ENCODE measurements at regions of chr15 and their contacts with region 1.

Region 1: GRCh38 chr15:38453971-38454695 is at the start of gene FAM98B:
- DNase-seq: peak; percentile 92
- ATAC-seq: peak; percentile 96
- H3K4me3 Mint-ChIP-seq: peak within 1 kb of the TSS; percentile 94
- H3K27ac Mint-ChIP-seq: peak within 1 kb of the TSS; percentile 92
- H3K4me1 Mint-ChIP-seq: peaks cover 34% of the 10 kb centered on the region
- H3K27me3 Mint-ChIP-seq: peaks cover 15% of the 10 kb centered on the region
- total RNA-seq, gene FAM98B: 34.8 to 41.4 TPM

Region 2: DNA sequence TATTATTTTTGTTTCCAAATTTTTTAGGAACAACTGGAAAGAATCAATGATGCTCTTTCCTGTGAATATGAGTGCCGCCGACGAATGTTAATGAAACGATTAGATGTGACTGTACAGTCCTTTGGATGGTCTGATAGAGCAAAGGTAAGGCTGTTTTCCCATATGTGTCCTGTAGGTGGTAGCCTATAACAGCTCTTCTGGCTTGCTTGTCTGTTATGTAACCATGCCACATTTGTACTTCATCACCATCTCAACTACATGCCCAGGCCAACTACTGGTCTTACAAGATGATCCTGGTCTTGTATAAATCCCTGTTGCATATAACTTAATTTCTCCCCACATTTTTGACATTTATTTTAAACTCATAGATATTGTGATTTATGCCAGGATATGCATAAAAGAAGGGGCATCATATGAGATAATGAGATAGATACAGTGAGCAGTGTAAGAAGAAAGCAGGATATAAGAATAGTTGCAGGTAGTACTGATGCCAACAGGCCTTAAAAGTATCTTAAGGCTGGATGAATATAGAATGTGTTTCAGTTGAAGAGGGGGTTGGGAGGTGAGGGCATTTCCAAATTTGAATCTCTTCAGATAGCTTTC is 20.1 kb after region 1 on chr15:
- CTCF ChIA-PET with region 1: interaction called, 11 read pairs
- DNase-seq: peak; percentile 48
- ATAC-seq: peak; percentile 98
- H3K4me3 Mint-ChIP-seq: no peak overlapping the region
- H3K27ac Mint-ChIP-seq: peak overlapping the region; percentile 30
- H3K4me1 Mint-ChIP-seq: peaks cover 6% of the 10 kb centered on the region
- H3K27me3 Mint-ChIP-seq: no peaks in the 10 kb centered on the region